AG04450 (cell line): ENCODE measurements at regions of chr1 and their contacts with region 1.

Region 1: DNA sequence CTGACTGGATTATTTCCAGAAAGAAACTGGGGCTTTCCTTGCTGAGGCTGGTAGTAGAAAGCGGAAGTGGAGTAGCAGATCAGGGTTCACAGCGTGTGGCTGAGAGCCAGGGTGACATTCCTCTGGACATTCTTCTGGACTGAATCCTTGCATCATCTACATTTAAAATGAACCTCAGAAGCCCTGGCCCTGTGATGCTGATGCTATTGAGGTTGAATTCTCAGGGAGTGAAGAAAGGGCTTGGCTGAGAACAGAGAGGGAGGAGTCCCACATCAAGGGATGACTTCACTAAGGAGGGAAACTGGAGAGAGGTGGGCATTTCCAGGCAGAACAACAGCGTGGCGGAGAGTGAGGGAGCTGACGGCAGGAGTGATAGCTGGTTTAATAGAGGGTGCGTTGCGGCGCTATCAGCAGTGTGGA is 102.3 kb upstream of the LMO4 start:
- DNase-seq: peak; percentile 96
- H3K4me3 ChIP-seq: no peak overlapping the region; the same call in 1 of the 2 replicates
- H3K27ac ChIP-seq: peak overlapping the region; percentile 90
- H3K27me3 ChIP-seq: no peaks in the 10 kb centered on the region
- CTCF ChIP-seq: no peak

Region 2: GRCh38 chr1:87167848-87168525 is 58.4 kb before region 1 on chr1:
- CTCF ChIA-PET with region 1: interaction called, 10 read pairs
- POLR2A ChIA-PET with region 1: no interaction called
- DNase-seq: no peak
- H3K4me3 ChIP-seq: no peak overlapping the region
- H3K27ac ChIP-seq: no peak overlapping the region
- H3K27me3 ChIP-seq: no peaks in the 10 kb centered on the region
- CTCF ChIP-seq: no peak

Region 3: DNA sequence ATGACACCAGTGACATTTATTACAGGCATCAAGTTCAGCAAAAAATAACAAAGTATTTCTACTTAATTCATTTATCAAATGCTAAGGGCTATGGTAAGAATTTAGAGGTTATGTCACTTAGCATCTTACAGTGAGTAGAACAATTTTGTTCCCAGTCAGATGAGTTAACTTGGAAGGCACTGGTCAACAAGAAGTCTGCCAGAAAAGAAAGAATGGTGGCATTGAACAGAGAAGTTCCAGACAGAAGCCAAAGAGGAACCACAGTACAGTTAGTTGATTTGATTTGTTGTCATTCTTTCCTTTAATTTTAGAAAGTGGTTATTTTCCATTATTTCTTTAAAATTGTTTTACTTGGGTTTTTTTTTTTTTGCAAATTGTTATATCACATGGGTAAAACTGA is 1225.5 kb after region 1 on chr1:
- CTCF ChIA-PET with region 1: interaction called, 10 read pairs
- POLR2A ChIA-PET with region 1: no interaction called
- DNase-seq: no peak
- H3K4me3 ChIP-seq: no peak overlapping the region
- H3K27ac ChIP-seq: no peak overlapping the region
- H3K27me3 ChIP-seq: no peaks in the 10 kb centered on the region
- CTCF ChIP-seq: no peak